IMR-90 (cell line): ENCODE measurements at regions of chr19 and their contacts with region 1.

Region 1: DNA sequence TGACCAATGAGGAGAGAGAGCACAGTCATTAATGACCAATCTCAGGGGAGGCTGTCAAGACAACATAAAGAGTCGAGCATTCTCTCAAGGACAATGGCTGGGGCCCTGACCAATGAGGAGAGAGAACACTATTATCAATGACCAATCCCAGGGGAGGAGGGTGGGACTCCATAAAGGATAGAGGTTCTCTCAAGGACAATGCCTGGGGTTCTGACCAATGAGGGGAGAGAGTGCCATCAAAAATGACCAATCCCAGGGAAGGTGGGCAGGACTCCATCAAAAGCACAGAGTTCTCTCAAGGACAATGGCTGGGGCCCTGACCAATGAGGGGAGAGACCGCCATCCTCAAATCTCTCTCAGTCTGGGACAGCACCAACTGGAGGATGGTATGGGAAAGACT is 3.3 kb upstream of the KLK11 start:
- DNase-seq: no peak
- ATAC-seq: no peak
- H3K4me3 ChIP-seq: no peak overlapping the region
- H3K27ac ChIP-seq: no peak overlapping the region
- H3K4me1 ChIP-seq: no peaks in the 10 kb centered on the region
- H3K27me3 ChIP-seq: no peaks in the 10 kb centered on the region
- CTCF ChIP-seq: no peak
- POLR2A ChIP-seq: no peak
- RAD21 ChIP-seq: no peak

Region 2: DNA sequence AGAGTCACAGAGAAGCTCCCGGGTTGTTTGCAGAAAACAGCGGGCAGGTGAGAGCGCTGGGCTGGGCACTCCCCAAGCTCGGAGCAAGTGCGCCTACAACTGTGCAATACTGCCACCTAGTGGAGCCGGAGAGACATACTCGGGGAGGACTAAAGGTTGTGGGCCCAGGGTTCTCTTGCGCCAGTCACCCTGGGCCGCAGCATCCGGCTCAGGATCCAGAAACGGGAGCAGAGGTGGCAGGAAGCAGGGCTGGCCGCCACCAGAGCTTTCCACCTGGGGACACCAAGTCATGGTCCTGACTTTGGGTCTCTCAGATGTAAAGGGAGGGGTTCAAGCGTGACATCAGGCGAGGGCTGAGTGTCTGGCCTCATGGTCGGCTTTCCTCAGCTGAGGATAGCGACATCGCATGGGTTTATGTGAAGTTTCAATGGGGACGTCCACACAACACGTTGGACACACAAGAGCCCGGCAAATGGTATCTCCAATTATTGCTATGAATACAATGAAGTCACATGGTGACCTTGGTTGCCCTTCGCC is 107.3 kb before region 1 on chr19:
- CTCF ChIA-PET with region 1: no interaction called
- POLR2A ChIA-PET with region 1: no interaction called
- dilution Hi-C with region 1: no loop called
- in situ Hi-C with region 1: no loop called
- intact Hi-C with region 1: no loop called
- DNase-seq: peak; percentile 67
- ATAC-seq: peak; percentile 98
- H3K4me3 ChIP-seq: no peak overlapping the region
- H3K27ac ChIP-seq: no peak overlapping the region
- H3K4me1 ChIP-seq: no peaks in the 10 kb centered on the region
- H3K27me3 ChIP-seq: no peaks in the 10 kb centered on the region; the same call in 1 of the 2 replicates
- CTCF ChIP-seq: peak; percentile 82
- POLR2A ChIP-seq: no peak
- RAD21 ChIP-seq: peak; percentile 89

Region 3: DNA sequence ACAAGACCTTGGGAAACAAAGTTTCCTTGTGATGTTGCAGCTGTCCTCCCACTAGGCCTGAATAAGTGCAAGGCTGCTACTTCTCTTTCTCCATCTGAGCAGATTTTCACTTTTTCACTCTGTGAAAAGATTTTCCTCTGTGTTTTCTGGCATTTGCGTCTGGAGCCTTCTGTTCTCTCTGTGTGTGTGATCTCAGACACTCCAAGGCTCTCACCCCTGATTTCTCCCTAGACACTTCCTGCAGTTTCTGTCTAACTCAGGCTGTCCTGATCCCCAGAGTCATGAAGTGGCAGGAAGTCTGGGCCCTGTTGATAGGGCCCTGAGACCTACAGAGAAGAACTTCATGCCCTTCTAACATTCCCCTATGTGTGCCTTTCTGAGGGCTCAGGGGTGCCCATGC is 149.5 kb after region 1 on chr19:
- CTCF ChIA-PET with region 1: no interaction called
- POLR2A ChIA-PET with region 1: no interaction called
- dilution Hi-C with region 1: no loop called
- in situ Hi-C with region 1: loop called (anchors 10 kb)
- intact Hi-C with region 1: no loop called
- DNase-seq: no peak
- ATAC-seq: no peak
- H3K4me3 ChIP-seq: no peak overlapping the region
- H3K27ac ChIP-seq: no peak overlapping the region
- H3K4me1 ChIP-seq: no peaks in the 10 kb centered on the region
- H3K27me3 ChIP-seq: no peaks in the 10 kb centered on the region
- CTCF ChIP-seq: no peak
- POLR2A ChIP-seq: no peak
- RAD21 ChIP-seq: no peak